ENCODE measurements at regions of chr21 and their contacts with region 1.

Region 1: DNA sequence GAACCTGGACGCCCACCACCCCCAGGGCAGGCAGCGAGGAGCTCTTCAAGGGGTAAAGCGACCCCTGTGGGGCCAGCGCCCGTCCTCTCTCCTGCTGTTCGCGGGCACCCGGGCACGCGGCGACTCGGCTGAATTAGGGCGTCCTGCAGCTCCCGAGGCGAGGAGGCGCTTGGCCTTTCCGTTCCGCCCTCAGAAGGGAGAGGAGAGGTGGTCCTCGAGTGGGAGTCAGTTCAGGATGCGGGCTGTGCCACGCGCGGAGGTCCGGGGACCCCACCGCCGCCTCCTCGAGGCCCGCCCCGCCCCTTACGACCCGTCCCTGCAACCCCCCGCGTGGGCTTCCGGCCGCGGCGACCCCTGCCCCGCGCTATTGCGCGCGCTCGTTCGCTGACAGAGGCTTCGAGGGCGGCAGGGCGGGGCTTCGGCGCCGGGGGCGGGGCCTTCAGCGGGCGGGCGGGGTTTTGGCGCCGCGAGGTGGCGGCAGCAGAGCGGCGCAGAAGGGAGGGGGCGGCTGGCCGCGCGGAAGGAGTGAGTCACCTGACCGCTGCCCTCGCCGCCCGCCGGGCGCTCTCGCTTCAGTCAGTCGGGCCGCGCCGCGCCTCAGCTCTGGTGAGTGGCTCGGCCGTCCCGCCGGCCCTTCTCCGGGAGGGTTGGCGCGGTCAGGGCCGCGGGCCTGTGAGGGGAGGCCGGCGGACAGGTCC is at the start of gene BACH1:
- DNase-seq: peak; percentile 90
- H3K4me3 ChIP-seq: peak within 1 kb of the TSS; percentile 71
- H3K27ac ChIP-seq: peak within 1 kb of the TSS; percentile 11
- H3K4me1 ChIP-seq: peaks cover 48% of the 10 kb centered on the region
- CTCF ChIP-seq: peak; percentile 32; the same call in 1 of the 2 replicates
- total RNA-seq, gene BACH1: 18.6 and 19.1 TPM in 2 replicates

Region 2: GRCh38 chr21:28550057-28550825 is 748.3 kb before region 1 on chr21:
- CTCF ChIA-PET with region 1: no interaction called
- POLR2A ChIA-PET with region 1: no interaction called
- intact Hi-C with region 1: no loop called
- DNase-seq: no peak
- H3K4me3 ChIP-seq: no peak overlapping the region
- H3K27ac ChIP-seq: no peak overlapping the region
- H3K4me1 ChIP-seq: no peaks in the 10 kb centered on the region
- CTCF ChIP-seq: no peak

Region 3: GRCh38 chr21:28745131-28746016 is 553.1 kb before region 1 on chr21:
- CTCF ChIA-PET with region 1: no interaction called
- POLR2A ChIA-PET with region 1: no interaction called
- intact Hi-C with region 1: no loop called
- DNase-seq: peak; percentile 79
- H3K4me3 ChIP-seq: peak overlapping the region; percentile 41
- H3K27ac ChIP-seq: no peak overlapping the region
- H3K4me1 ChIP-seq: peaks cover 5% of the 10 kb centered on the region
- CTCF ChIP-seq: peak; percentile 89

Region 4: DNA sequence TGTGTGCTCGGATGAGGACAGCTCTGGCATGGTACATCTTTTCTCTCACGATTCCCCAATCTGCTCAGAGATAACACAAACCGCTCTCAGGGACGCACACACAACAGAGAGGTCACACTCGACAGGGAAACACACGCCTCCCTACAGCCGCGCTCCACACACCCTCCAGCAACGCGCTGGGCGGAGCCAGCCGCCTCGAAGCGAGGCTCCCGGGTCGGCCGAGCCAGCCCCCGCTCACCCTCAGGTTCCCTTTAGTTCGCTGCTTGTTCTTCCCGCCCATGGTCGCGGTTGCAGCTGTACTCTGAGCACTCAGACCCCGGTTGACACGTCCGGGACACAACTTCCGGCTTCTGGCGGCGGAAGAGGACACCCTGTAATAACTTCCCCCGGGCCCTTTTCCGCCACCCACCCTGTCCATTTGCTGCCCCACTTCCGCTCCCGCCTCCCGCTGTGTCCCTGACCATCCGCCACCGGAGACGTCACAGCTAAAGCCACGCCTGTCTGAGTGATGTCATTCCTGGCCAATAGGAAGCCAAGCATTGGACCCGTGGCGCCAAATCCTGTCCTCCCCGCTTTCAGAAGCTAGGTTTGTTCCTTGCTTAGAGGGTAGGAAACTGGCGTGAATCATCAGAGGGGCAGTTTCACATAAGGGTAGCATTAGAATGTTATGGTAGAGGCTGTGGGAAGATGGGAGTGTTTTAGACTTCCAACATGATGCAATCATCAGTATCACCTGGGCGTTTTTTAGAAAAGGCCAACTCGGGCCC is 305.8 kb before region 1 on chr21 and contains the start of gene LTN1:
- CTCF ChIA-PET with region 1: no interaction called
- POLR2A ChIA-PET with region 1: no interaction called
- intact Hi-C with region 1: loop called (anchors 10 kb)
- DNase-seq: peak; percentile 99
- H3K4me3 ChIP-seq: peak within 1 kb of the TSS; percentile 90
- H3K27ac ChIP-seq: peak within 1 kb of the TSS; percentile 83
- H3K4me1 ChIP-seq: peaks cover 27% of the 10 kb centered on the region
- CTCF ChIP-seq: no peak
- total RNA-seq, gene LTN1: 17.2 and 18.4 TPM in 2 replicates

Region 5: GRCh38 chr21:29125191-29125590 is 173.3 kb before region 1 on chr21:
- CTCF ChIA-PET with region 1: no interaction called
- POLR2A ChIA-PET with region 1: interaction called, 10 read pairs
- intact Hi-C with region 1: loop called (anchors 5 kb)
- DNase-seq: peak; percentile 56
- H3K4me3 ChIP-seq: peak overlapping the region; percentile 29
- H3K27ac ChIP-seq: peak overlapping the region; percentile 29
- H3K4me1 ChIP-seq: peaks cover 31% of the 10 kb centered on the region
- CTCF ChIP-seq: 0 out of 2 replicates have a peak, but pooled peaks have one; percentile 9

Region 6: DNA sequence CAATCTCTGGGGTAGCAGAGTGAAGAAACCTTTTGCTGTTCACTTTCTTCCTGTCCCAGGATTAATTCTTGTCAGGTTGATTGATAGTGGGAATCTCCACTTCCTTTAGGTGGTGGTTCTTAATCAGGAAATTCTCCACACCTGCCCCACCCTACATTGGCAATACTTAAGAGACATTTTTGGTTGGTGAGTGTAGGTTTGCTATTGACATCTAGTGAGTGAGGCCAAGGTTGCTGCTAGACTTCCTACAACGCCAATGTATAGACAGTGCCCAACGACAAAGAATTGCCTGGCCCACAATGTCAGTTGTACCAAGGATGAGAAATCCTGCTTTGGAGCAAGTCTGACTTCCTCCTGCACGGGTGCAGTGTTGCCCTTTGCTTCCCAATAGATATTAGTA is 129.6 kb before region 1 on chr21:
- CTCF ChIA-PET with region 1: no interaction called
- POLR2A ChIA-PET with region 1: no interaction called
- intact Hi-C with region 1: no loop called
- DNase-seq: no peak
- H3K4me3 ChIP-seq: no peak overlapping the region
- H3K27ac ChIP-seq: no peak overlapping the region
- H3K4me1 ChIP-seq: peaks cover 5% of the 10 kb centered on the region
- CTCF ChIP-seq: no peak

Region 7: GRCh38 chr21:29318354-29318753 is 19.9 kb after region 1 on chr21:
- CTCF ChIA-PET with region 1: no interaction called
- POLR2A ChIA-PET with region 1: interaction called, 13 read pairs
- intact Hi-C with region 1: no loop called
- DNase-seq: no peak
- H3K4me3 ChIP-seq: no peak overlapping the region
- H3K27ac ChIP-seq: no peak overlapping the region
- H3K4me1 ChIP-seq: no peaks in the 10 kb centered on the region
- CTCF ChIP-seq: no peak

Measured in OCI-LY7 (cell line).